Activated B cell treated with CpG ODN at 0.5 μM for 24 hours (primary cell): ENCODE measurements at regions of chr3 and their contacts with region 1.

Region 1: DNA sequence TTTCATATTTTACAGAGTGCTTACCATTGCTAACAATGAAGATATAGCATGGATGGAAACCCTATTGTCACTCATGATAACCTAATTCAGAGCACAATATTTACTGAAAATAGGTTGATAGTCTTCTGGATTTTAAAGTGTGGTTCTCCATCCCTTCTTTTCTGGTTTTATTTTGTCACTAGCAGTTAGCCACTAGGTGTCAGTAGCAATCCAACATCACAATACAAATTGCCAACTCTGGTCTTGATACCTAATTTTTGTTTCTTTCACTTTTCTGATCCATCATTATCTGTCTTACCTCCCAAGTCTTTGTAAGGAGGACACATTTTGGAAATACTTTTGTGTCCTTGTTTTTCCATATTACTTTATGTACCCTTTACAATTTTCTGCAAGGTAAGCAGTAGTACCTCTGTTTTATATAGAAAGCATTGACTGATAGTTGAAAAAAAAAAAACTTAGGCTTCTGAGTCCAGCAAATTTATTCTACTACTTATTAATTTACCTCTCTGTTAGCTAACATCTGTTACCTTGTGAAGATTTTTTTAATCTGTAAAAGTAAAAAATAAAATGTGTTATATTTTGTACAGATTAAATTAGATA is 28.3 kb upstream of the CRYBG3 start:
- DNase-seq: no peak
- ATAC-seq: no peak
- H3K4me3 Mint-ChIP-seq: no peak overlapping the region
- H3K27ac Mint-ChIP-seq: no peak overlapping the region
- H3K4me1 Mint-ChIP-seq: no peaks in the 10 kb centered on the region
- H3K27me3 Mint-ChIP-seq: no peaks in the 10 kb centered on the region
- CTCF ChIP-seq: no peak

Region 2: DNA sequence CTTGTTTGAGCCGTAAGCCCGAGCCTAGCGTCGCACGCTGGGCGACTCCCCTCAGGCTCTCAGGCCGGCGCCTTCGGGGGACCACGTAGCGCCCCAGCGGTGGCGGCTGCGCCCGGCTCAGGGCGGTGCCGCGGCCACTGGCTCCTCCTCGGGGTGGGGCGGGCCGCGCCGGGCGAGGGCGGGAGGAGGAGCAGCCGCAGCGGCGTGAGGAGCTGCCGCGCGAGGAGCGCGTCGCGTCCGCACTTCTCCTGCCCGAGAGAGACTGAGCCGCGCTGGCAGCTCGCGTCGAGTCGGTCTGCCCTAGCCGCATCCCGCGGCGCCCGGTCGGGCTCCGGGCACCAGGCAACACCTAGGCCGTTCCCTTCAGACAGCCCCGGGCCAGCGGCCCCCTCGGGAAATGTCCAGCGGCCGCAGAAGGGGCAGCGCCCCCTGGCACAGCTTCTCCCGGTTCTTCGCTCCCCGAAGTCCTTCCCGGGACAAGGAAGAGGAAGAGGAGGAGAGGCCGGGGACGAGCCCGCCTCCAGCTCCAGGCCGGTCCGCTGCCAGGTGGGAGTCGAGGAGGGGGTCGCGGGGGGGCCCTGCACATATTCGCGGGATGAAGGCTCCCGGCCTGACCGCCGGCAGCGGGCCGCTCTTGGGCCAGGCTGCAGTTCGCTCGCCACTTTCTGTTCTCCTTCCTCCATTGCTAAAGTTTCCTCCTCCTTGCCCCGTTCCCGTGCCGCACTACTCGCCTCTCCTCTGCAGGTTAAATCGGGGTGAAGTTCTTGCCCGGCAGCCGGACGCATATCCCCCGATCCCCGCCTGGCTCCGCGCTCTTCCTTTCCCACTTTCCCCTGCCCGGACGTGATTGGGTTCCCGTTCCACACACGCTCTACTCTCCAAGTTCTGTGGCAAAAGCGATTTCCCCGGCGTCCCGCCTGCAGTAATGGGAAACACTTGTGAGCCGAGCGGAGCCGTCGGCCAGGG is 28.6 kb after region 1 on chr3 and contains the start of gene CRYBG3:
- CTCF ChIA-PET with region 1: no interaction called
- POLR2A ChIA-PET with region 1: no interaction called
- intact Hi-C with region 1: loop called (anchors 2 kb)
- DNase-seq: peak; percentile 80
- ATAC-seq: peak; percentile 99
- H3K4me3 Mint-ChIP-seq: peak within 1 kb of the TSS; percentile 88
- H3K27ac Mint-ChIP-seq: peak within 1 kb of the TSS; percentile 47
- H3K4me1 Mint-ChIP-seq: peaks cover 21% of the 10 kb centered on the region
- H3K27me3 Mint-ChIP-seq: peaks cover 44% of the 10 kb centered on the region
- CTCF ChIP-seq: no peak
- total RNA-seq, gene CRYBG3: 1.5 TPM in 2 replicates

Region 3: DNA sequence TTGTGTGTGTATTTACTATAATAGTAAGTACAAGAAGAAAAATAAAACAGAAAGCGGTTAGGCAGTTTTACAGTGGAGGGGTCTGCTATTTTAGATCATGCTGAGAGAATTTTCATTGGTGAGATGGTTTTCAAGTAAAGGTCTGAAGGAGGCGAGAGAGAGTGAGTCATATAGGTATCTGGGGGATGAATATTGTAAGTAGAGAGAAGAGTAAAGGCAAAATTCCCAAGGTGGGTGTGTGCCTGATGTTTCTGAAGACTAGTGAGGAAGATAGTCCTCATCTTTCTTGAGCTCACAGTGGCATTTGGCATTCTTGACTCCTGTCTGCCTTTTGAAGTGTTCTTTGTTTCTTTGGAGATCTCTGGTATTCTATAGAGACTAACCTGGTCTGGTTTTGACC is 66.8 kb after region 1 on chr3:
- CTCF ChIA-PET with region 1: no interaction called
- POLR2A ChIA-PET with region 1: no interaction called
- intact Hi-C with region 1: no loop called
- DNase-seq: no peak
- ATAC-seq: no peak
- H3K4me3 Mint-ChIP-seq: no peak overlapping the region
- H3K27ac Mint-ChIP-seq: no peak overlapping the region
- H3K4me1 Mint-ChIP-seq: no peaks in the 10 kb centered on the region
- H3K27me3 Mint-ChIP-seq: peaks cover 2% of the 10 kb centered on the region
- CTCF ChIP-seq: no peak

Region 4: DNA sequence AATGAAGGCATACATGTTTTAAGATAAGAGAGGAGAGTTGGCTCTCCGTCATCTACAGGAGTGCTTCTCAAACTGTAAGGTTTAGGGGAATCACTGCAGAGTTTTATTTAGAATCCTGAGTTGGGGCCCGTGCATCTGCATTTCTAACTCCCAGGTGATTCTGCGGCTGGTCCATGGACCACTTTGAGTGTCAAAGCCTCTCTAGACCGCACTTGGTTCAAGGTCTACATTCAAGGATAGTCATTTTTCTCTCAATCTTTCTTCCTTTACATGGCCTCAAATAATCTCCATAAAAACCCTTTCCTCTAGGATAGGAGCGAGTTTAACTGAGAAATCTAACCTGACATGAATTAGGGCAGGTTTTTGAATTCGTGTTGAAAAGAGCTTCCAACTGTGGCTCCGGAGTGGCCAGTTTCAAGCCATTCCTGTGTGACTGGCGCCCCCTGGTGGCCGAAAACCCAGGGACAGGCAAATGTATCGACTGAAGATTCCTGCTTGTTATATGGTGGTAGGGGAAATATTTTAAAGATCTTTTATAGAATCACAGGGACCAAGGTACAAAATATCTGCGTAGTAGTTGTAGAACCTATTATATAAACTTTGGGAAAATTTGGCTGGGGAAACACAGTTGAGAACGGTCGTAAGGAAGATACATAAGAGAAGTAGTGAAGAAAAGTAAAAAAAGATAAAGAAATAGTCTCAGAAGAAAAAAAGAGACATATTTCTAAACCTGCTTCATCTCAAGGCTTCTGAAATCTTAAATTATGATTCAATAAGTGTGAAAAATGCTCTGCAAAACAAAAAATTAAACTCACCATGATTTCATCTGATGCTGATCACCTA is 229.7 kb after region 1 on chr3:
- CTCF ChIA-PET with region 1: interaction called, 65 read pairs
- POLR2A ChIA-PET with region 1: no interaction called
- intact Hi-C with region 1: loop called (anchors 1 kb)
- DNase-seq: peak; percentile 79
- ATAC-seq: peak; percentile 66
- H3K4me3 Mint-ChIP-seq: no peak overlapping the region
- H3K27ac Mint-ChIP-seq: no peak overlapping the region
- H3K4me1 Mint-ChIP-seq: no peaks in the 10 kb centered on the region
- H3K27me3 Mint-ChIP-seq: peaks cover 5% of the 10 kb centered on the region
- CTCF ChIP-seq: peak; percentile 85

Region 5: GRCh38 chr3:98095870-98096269 is 302.4 kb after region 1 on chr3:
- CTCF ChIA-PET with region 1: no interaction called
- POLR2A ChIA-PET with region 1: no interaction called
- intact Hi-C with region 1: no loop called
- DNase-seq: no peak
- ATAC-seq: no peak
- H3K4me3 Mint-ChIP-seq: no peak overlapping the region
- H3K27ac Mint-ChIP-seq: no peak overlapping the region
- H3K4me1 Mint-ChIP-seq: no peaks in the 10 kb centered on the region
- H3K27me3 Mint-ChIP-seq: no peaks in the 10 kb centered on the region
- CTCF ChIP-seq: no peak

Region 6: DNA sequence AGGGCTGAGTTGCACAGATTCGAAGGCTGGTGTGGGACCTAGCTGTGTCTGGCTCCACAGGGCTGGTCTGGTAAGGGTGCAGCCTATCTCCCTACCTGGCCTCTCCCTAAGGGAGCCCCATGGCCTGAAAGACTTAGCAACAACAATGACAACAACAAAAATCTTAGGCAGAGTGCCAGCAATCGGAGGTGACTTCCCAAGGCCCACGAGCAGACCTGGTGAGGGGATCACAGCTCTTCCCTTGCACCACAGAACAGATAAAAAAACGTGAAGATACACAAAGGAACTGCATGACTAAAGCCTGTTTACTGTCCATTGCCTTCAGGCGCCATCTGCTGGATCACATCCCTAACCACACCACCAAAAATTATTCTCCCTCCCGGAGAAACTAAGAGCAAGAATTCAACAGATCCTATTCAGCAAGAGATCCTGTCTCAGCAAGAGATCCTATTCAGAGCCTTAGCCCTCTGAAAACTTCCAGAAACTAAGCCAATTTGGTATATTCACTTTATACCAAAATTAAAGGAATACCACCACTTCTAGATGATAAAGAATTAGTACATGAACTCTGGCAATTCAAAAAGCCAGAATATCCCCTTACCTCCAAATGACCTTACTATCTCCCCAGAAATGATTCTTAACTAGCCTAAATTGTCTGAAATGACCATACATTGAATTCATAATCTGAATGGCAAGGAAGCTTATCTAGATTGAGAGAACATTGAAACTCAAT is 536.0 kb after region 1 on chr3:
- CTCF ChIA-PET with region 1: no interaction called
- POLR2A ChIA-PET with region 1: no interaction called
- intact Hi-C with region 1: loop called (anchors 10 kb)
- DNase-seq: no peak
- ATAC-seq: no peak
- H3K4me3 Mint-ChIP-seq: no peak overlapping the region
- H3K27ac Mint-ChIP-seq: no peak overlapping the region
- H3K4me1 Mint-ChIP-seq: no peaks in the 10 kb centered on the region
- H3K27me3 Mint-ChIP-seq: peaks cover 6% of the 10 kb centered on the region
- CTCF ChIP-seq: no peak